Mucosa of descending colon (tissue), 3 donors: ENCODE measurements at regions of chr5 and their contacts with region 1.

Region 1: GRCh38 chr5:148125641-148126040 is 42.7 kb upstream of the SPINK14 start:
- DNase-seq: no peak
- ATAC-seq: no peak
- H3K4me3 ChIP-seq: no peak overlapping the region
- H3K4me1 ChIP-seq: peaks cover 1% of the 10 kb centered on the region
- CTCF ChIP-seq: no peak

Region 2: GRCh38 chr5:147773139-147773538 is 352.5 kb before region 1 on chr5:
- intact Hi-C with region 1: no loop called
- DNase-seq: no peak
- ATAC-seq: no peak
- H3K4me3 ChIP-seq: no peak overlapping the region
- H3K4me1 ChIP-seq: no peaks in the 10 kb centered on the region
- CTCF ChIP-seq: no peak

Region 3: GRCh38 chr5:147949711-147950573 is 175.7 kb before region 1 on chr5:
- intact Hi-C with region 1: loop called in 1 of 2 experiments (anchors 10 kb)
- DNase-seq: no peak
- ATAC-seq: peak; percentile 66
- H3K4me3 ChIP-seq: no peak overlapping the region
- H3K4me1 ChIP-seq: no peaks in the 10 kb centered on the region
- CTCF ChIP-seq: peak; percentile 41

Region 4: GRCh38 chr5:148063861-148064260 is 61.8 kb before region 1 on chr5 and contains the start of gene SPINK5:
- intact Hi-C with region 1: no loop called
- DNase-seq: no peak
- ATAC-seq: no peak
- H3K4me3 ChIP-seq: no peak within 1 kb of the TSS
- H3K4me1 ChIP-seq: no peaks in the 10 kb centered on the region
- CTCF ChIP-seq: no peak
- total RNA-seq, gene SPINK5: 2.8 to 11.0 (median 6.2) TPM

Region 5: GRCh38 chr5:148297731-148298130 is 172.1 kb after region 1 on chr5:
- intact Hi-C with region 1: no loop called
- DNase-seq: no peak
- ATAC-seq: no peak
- H3K4me3 ChIP-seq: no peak overlapping the region
- H3K4me1 ChIP-seq: no peaks in the 10 kb centered on the region
- CTCF ChIP-seq: no peak

Region 6: GRCh38 chr5:148443998-148444397 is 318.4 kb after region 1 on chr5:
- intact Hi-C with region 1: no loop called
- DNase-seq: peak in 1 of 3 donors; percentile 80
- ATAC-seq: peak; percentile 83
- H3K4me3 ChIP-seq: no peak overlapping the region
- H3K4me1 ChIP-seq: no peaks in the 10 kb centered on the region
- CTCF ChIP-seq: peak; percentile 9